Ascending aorta (tissue), 2 donors: ENCODE measurements at regions of chr1 and their contacts with region 1.

Region 1: DNA sequence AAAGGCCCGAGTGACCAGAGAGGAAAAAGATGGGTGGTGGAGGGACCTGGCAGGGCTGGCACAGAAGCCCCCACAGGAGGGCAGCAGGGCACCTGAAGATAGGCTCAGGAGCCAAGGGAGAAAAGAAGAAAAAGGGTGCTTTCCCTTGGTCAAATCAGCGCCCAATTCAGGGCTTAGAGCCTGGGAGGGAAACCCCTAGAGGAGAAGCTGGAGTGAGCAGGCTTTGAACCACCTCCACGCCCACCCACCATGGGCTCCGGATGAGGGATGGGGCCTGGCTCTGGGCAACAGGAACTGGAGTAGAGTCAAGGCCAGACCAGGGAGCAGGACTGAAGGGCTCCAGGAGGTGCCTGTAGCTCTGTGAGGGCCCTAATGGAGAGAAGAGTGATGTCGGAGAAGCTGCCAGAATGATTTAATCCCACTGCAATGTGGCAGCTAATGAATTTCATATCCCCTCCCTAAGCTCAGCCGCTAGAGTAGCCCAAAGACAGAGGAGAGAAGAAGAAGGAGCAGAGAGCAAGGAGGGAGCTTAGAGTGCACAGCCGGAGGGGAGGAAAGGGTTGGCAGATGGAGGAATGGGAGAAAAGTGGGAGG is 12.0 kb upstream of the PRELP start:
- DNase-seq: peak in 1 of 2 donors; percentile 79
- H3K4me3 ChIP-seq: peak overlapping the region in 1 of 2 donors; percentile 28
- H3K27ac ChIP-seq: peak overlapping the region; percentile 90 to 91
- H3K4me1 ChIP-seq: peaks cover 43 to 62% of the 10 kb centered on the region in 2 donors
- H3K27me3 ChIP-seq: no peaks in the 10 kb centered on the region
- CTCF ChIP-seq: peak in 1 of 3 experiments; percentile 24

Region 2: DNA sequence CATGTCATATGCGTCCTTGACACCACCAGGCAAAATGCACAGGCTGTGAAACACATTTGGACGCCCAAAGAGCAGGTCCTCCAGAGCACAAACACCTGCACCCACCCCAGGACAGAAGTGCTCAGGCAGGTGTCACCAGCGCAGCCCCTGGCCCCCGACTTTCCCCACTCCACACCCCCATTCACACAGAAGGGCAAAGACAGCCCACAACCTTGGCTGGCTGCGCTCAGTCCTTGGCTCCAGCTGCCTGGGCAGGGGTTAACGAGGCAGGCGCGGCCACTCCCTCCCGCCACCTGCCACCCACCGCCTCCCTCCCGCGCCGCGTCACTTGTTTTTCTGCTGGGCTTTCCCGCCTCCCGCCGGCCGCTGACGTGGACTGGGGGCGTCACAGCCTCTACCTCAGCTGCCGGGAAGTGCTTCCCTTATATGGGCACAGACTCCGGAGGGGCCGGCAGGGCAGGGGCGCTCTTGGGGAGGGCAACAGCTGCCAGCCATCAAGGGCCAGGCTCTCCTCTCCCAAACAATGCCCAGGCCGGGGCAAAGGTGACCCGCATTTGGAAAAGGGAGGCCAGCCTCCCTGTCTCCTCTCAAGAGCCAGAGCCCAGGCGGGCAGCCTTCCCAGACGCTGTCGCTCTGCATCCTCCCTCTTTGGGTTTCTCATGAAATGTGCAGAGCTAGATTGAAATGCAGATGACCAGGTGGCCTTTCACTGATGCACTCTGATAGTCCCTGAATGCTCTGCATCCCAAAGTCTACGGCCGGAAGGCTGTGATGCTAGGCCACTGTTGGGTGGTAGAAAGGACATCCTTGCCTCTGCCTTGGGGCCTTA is 173.1 kb before region 1 on chr1:
- intact Hi-C with region 1: loop called (anchors 5 kb)
- DNase-seq: peak; percentile 88 to 99
- H3K4me3 ChIP-seq: peak overlapping the region; percentile 37 to 44
- H3K27ac ChIP-seq: peak overlapping the region; percentile 88 to 93
- H3K4me1 ChIP-seq: peaks cover 14 to 33% of the 10 kb centered on the region in 2 donors
- H3K27me3 ChIP-seq: no peaks in the 10 kb centered on the region
- CTCF ChIP-seq: no peak

Region 3: GRCh38 chr1:203402629-203403337 is 60.8 kb before region 1 on chr1:
- intact Hi-C with region 1: loop called (anchors 1 kb)
- DNase-seq: no peak
- H3K4me3 ChIP-seq: no peak overlapping the region
- H3K27ac ChIP-seq: peak overlapping the region; percentile 79 to 97
- H3K4me1 ChIP-seq: peaks cover 23 to 38% of the 10 kb centered on the region in 2 donors
- H3K27me3 ChIP-seq: no peaks in the 10 kb centered on the region
- CTCF ChIP-seq: no peak

Region 4: DNA sequence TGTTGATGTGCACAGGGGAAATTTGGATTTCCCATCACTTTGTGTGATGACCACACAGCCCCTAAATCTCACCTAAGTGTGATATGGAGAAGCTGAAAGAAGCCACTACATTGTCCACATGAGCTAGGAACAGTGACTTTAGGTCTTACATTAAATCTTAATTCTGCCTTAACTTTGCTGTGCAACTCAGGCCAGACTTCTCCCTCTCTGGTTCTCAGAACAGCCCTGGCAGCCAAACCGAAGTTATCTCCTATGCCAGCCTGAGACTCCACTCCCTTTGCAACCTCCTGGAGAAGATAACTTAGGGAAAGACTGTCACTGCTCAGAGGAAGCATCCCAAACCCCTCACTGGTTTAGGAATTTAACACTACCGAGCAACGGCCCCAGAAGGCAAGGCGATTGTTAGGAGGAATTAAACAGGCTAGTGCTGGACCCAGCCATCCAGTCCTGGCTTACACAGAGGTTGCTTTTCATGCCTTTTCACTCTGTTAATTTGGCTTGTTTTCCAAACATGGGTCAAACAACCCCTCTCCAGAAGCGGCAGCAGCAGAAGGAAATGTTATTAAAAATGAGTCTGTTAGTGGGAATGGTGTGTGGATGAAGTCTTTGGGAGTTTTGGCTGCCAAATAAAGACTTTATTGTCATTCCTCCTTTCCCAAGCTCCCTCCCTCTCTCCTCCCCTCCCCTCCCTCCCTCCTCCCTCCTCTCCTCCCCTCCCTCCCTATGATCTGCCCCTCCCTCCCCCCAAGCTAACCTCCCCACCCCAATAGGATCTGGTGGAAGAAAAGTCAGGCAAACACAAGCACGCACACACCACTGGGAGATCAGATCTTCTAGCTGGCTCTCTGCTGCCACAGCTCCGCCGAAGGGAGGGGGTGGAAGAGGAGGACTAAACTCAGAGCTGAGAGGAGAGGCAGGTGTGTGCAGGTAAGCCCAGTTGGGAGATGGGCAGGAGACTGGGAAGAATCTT is 11.7 kb after region 1 on chr1 and contains the start of gene PRELP:
- intact Hi-C with region 1: loop called (anchors 1 kb)
- DNase-seq: peak in 1 of 2 donors; percentile 85
- H3K4me3 ChIP-seq: peak within 1 kb of the TSS; percentile 56 to 63
- H3K27ac ChIP-seq: peak within 1 kb of the TSS; percentile 88 to 92
- H3K4me1 ChIP-seq: peaks cover 5 to 14% of the 10 kb centered on the region in 2 donors
- H3K27me3 ChIP-seq: no peaks in the 10 kb centered on the region
- CTCF ChIP-seq: no peak
- total RNA-seq, gene PRELP: 142 TPM

Region 5: DNA sequence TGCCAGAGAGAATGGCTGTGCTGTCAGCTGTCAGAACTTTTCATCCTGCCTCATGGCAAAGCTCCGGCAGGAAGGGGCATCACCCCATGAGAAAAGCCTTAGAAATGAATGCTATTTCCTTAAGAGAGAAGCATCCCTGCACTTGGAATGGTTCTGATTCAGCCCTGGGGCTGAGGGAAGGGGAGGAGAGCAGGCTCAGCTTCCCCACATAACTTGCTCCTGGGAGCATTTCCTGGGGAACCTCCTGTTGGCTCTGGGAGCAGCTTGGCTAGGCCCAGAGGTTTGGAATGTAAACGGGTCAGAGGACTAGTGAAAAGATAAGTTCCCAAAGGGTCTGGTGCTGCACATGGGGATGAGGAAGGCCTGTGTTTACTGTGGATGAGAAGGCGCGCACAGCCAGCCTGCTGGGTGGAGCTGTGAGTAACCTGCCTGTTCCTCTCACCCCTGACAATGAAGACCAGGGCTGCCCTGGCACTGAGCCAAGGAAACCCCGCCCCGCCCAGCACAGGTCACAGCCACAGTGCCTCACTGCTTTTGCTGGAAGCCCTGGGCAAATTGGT is 17.0 kb after region 1 on chr1:
- intact Hi-C with region 1: loop called (anchors 1 kb)
- DNase-seq: peak; percentile 27 to 94
- H3K4me3 ChIP-seq: peak overlapping the region; percentile 56 to 63
- H3K27ac ChIP-seq: peak overlapping the region; percentile 88 to 92
- H3K4me1 ChIP-seq: peaks cover 27 to 47% of the 10 kb centered on the region in 2 donors
- H3K27me3 ChIP-seq: no peaks in the 10 kb centered on the region
- CTCF ChIP-seq: no peak

Region 6: DNA sequence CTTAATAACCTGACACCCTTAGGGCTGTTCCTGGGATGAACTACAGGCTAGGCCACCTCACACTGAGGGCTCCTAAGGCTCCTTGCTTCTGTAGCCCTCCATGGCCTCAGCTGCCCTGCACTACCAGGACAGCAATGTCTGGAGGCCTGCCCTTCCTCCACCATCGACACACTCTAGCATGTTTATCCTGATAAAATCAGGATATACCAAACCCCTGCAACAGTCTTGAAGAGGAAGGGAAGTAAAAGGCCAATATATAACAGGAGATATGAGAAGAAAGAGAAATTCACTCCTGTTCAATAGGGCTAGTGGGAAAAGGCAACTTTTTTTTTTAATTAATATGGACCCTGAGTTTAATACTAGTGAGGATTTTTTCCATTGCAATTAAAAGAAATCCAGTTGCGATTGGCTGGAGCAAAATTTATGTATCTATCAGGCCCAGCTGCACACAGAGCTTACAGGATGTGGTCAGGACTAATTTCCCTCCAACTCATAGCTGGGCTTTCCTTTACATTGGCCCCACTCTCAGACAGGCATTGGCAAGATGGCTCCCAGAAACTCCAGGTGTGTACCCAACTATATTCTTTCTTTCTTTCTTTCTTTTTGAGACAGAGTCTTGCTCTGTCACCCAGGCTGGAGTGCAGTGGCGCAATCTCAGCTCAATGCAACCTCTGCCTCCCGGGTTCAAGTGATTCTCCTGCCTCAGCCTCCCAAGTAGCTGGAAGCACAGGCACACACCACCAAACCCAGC is 149.5 kb after region 1 on chr1:
- intact Hi-C with region 1: no loop called
- DNase-seq: no peak
- H3K4me3 ChIP-seq: no peak overlapping the region
- H3K27ac ChIP-seq: no peak overlapping the region
- H3K4me1 ChIP-seq: no peaks in the 10 kb centered on the region
- H3K27me3 ChIP-seq: no peaks in the 10 kb centered on the region
- CTCF ChIP-seq: no peak